Activated B cell treated with CpG ODN at 0.5 μM for 24 hours (primary cell): ENCODE measurements at regions of chr9 and their contacts with region 1.

Region 1: DNA sequence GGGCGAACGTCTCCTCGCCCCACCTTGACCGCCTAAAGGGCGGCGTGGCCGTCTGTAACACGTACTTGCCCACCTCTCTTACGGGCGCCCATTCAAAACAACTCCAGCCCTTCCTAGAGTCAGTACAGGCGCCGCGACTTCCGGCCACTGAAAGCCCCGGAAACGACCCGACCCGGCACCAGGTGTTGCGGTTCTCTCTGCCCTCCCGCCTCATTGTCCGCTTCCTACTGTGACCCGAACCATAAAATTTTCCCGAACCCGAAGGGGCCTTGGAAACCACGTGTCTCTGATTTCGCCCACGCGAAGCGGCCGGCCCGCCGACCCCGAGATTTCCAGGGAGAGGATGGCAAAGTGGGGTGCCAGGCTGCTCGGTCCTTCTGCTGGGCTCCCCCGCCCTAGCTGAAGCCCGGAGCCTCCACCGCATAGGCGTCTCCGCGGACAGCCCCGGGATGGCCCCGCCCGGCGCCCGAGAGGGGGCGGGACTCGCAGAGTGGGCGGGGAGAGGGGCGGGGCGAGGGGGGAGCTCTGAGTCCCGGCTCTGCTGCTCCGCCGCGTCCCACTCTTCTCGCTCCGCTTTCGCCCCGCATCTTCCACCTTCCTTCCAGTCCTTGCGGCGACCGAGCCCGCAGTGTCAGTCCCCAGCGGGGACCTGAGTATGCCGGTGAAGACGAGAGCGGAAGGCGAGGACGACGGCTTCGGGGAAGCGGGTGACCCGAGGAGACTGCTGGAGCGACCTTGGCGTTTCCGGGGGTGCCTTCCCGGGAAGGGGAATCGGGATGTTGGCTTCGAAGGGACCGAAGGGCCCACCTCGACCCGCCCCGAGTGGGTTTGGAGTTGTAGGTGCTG is 684 bp upstream of the PTGES2 start:
- DNase-seq: peak; percentile 90
- ATAC-seq: peak; percentile 79
- H3K4me3 Mint-ChIP-seq: peak overlapping the region; percentile 97
- H3K27ac Mint-ChIP-seq: peak overlapping the region; percentile 99
- H3K4me1 Mint-ChIP-seq: peaks cover 34% of the 10 kb centered on the region
- H3K27me3 Mint-ChIP-seq: peaks cover 3% of the 10 kb centered on the region
- CTCF ChIP-seq: no peak

Region 2: DNA sequence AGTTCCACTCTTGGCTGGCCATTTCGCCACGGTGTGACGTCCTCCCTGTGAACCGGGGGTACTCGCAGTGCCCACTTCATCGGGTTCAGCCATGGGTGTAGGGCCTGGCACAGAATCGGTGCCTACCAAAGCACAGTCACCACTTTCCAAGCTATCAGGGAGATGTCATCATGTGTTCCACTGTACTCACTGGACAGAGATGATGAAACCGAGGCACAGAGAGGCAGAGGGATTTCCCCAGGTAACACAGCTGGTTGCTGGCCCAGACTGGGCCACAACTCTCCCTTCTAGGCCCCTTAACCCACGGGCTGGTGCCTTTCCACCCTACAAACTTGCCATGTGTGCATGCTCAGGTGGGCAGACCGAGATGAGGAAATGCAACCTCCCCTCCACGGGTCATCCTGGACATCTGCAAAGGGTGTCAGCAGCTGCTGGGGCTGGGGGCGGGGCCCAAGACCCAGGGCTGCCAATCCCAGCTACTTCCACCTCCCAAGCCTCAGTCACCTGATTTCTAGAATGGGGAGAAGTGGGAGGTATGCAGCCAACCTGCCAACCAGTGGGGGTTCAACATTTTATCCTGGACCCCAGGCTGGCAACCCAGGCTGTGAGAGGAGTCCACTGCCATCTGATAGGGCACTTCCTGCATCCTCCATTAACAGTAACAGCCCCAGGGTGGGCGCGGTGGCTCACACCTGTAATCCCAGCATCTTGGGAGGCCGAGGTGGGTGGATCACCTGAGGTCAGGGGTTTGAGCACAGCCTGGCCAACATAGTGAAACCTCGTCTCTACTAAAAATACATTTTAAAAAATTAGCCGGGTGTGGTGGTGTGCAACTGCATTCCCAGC is 348.9 kb before region 1 on chr9:
- CTCF ChIA-PET with region 1: no interaction called
- POLR2A ChIA-PET with region 1: no interaction called
- intact Hi-C with region 1: loop called (anchors 5 kb)
- DNase-seq: peak; percentile 63
- ATAC-seq: peak; percentile 61
- H3K4me3 Mint-ChIP-seq: peak overlapping the region; percentile 94
- H3K27ac Mint-ChIP-seq: peak overlapping the region; percentile 98
- H3K4me1 Mint-ChIP-seq: peaks cover 70% of the 10 kb centered on the region
- H3K27me3 Mint-ChIP-seq: no peaks in the 10 kb centered on the region
- CTCF ChIP-seq: no peak

Region 3: DNA sequence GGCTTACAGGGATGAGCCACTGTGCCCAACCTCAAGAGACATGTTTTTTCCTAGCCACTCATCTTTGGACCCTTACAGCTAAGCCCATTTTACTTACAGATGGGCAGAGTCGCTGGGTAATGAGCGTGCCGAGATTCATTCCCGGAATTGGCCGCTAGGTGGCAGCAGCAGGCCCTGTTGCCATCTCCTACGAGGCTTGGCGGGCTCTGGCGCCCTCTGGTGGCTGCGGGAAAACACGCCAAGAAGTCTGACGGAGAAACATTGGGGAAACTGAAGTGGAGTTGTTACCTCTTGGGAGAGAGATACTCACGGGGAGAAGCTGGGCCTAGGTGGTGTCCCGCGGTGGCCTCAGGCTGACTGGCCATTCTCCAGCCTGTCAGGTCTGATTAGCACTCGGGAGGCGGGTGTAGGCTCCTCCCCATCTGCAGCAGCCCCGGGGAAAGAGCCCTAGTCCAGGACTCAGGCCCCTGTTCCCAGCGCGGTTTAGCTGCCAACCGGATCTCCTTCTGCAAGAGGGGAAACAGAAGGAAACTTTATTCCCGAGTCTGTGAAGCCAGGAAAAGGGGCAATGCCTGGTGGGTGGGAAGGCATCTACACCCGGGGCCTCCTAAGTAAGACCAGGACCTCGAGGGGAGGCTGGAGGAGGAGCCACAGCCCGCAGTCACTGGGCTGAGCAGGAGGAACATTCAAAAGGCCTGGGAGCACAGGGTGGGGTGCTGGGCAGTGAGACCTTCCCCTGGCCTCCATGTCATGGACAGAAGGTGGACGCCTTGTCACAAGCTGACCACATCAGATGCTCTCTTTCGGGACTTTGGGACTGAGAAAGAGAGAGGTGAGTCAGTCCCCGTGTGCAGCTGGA is 10.4 kb before region 1 on chr9:
- CTCF ChIA-PET with region 1: interaction called, 4 read pairs
- POLR2A ChIA-PET with region 1: interaction called, 16 read pairs
- intact Hi-C with region 1: loop called (anchors 1 kb)
- DNase-seq: peak; percentile 98
- ATAC-seq: peak; percentile 48
- H3K4me3 Mint-ChIP-seq: no peak overlapping the region
- H3K27ac Mint-ChIP-seq: peak overlapping the region; percentile 56
- H3K4me1 Mint-ChIP-seq: peaks cover 42% of the 10 kb centered on the region
- H3K27me3 Mint-ChIP-seq: no peaks in the 10 kb centered on the region
- CTCF ChIP-seq: peak; percentile 99

Region 4: GRCh38 chr9:128191406-128192046 is 63.3 kb after region 1 on chr9 and contains the start of gene CIZ1:
- CTCF ChIA-PET with region 1: no interaction called
- POLR2A ChIA-PET with region 1: no interaction called
- intact Hi-C with region 1: loop called (anchors 2 kb)
- DNase-seq: peak; percentile 85
- ATAC-seq: peak; percentile 89
- H3K4me3 Mint-ChIP-seq: peak within 1 kb of the TSS; percentile 94
- H3K27ac Mint-ChIP-seq: peak within 1 kb of the TSS; percentile 92
- H3K4me1 Mint-ChIP-seq: peaks cover 25% of the 10 kb centered on the region
- H3K27me3 Mint-ChIP-seq: no peaks in the 10 kb centered on the region
- CTCF ChIP-seq: no peak
- total RNA-seq, gene CIZ1: 142 and 160 TPM in 2 replicates